ENCODE measurements at regions of chr11 and their contacts with region 1.

Region 1: DNA sequence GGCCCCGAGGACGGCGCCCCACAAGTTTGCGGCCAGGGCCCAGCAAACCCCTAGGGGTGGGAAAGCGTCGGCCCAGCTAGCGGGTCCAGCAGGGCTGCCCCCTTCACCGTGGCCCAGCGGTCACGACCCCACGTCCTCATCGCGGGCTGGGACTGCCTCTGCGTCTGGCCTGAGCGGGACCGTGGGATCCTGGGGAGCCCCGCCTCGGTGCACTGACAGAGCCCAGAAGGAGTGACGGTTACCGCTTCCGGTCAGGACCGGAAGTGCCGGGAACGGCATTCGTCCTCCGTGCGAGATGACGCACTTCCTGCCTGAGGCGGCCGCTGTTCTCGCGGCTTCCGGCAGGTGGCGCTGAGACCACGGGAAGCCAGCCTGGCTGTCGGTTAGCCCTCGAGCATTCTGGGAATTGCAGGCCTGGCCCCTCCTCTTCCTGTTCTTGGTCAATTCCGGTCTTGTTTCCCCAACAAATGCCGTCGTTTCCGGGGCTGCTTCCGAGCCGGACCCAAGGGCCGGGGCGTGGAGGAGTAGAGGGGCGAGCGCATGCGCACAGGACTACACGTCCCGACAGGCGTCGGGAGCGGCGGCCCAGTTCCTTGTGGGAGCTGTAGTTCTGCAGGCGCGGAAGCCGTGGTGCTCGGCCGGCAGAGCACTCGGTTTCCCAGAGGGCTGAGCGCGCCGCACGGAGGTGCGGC is at the start of gene TSSC4:
- DNase-seq: peak; percentile 100
- H3K4me3 ChIP-seq: peak within 1 kb of the TSS; percentile 81 to 88 (median 82)
- H3K27ac ChIP-seq: peak within 1 kb of the TSS; percentile 99
- H3K4me1 ChIP-seq: peaks cover 0 to 31% (median 28%) of the 10 kb centered on the region in 4 donors
- H3K27me3 ChIP-seq: no peaks in the 10 kb centered on the region
- CTCF ChIP-seq: peak; percentile 81 to 97 (median 92)
- EP300 ChIP-seq: peak in 2 of 4 donors; percentile 87 to 96
- POLR2A ChIP-seq: peak; percentile 85 to 93
- total RNA-seq, gene TSSC4: 45.1 to 60.1 (median 53.2) TPM

Region 2: DNA sequence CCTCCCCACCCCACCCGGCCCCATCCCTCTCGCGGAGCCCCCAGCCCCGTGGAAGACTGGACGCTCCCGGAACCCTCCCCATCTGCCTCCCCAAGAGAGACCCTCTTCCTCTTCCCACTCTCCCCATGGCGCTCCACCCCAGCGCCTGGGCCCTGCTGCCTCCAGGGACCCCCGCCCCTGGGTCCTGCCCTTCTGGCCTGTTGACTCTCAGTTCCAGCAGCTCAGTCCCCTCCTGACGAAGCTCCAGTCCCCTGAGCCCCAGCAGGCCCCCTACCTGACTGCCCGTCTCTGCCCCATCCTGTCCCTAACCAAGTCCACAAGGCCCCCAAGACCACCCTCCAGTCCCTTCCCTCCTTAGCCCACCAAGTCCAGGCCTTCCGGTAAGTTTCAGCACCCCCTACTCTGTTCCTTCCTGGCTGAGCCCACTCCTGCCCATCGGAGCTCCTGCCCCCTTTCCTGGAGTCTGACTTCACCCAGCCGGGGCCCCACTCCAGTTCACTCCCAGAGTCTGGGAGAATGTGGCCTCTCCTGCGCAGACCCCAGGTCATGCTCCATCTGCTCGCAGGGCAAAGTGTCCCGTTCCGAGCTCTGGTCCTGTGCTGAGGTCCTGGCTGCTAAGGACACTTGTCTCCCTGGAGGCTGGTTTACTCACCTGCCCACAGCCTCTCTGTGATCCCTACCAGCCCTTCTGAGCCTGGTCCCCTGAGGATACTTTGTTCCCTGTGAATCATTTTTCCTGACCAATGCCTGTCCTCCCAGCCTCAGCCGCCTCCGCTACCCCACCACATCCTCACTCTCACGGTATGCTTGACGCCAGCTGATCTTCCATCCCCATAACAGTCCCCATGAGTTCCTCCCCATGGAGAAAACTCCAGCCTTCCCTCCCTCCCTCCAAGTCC is 650.6 kb before region 1 on chr11:
- intact Hi-C with region 1: loop called (anchors 10 kb)
- DNase-seq: no peak
- H3K4me3 ChIP-seq: peak overlapping the region in 1 of 4 donors; percentile 24
- H3K27ac ChIP-seq: no peak overlapping the region
- H3K4me1 ChIP-seq: peaks cover 0 to 25% (median 15%) of the 10 kb centered on the region in 4 donors
- H3K27me3 ChIP-seq: peaks cover 20 to 33% (median 23%) of the 10 kb centered on the region in 3 donors
- CTCF ChIP-seq: no peak
- EP300 ChIP-seq: no peak
- POLR2A ChIP-seq: no peak

Region 3: DNA sequence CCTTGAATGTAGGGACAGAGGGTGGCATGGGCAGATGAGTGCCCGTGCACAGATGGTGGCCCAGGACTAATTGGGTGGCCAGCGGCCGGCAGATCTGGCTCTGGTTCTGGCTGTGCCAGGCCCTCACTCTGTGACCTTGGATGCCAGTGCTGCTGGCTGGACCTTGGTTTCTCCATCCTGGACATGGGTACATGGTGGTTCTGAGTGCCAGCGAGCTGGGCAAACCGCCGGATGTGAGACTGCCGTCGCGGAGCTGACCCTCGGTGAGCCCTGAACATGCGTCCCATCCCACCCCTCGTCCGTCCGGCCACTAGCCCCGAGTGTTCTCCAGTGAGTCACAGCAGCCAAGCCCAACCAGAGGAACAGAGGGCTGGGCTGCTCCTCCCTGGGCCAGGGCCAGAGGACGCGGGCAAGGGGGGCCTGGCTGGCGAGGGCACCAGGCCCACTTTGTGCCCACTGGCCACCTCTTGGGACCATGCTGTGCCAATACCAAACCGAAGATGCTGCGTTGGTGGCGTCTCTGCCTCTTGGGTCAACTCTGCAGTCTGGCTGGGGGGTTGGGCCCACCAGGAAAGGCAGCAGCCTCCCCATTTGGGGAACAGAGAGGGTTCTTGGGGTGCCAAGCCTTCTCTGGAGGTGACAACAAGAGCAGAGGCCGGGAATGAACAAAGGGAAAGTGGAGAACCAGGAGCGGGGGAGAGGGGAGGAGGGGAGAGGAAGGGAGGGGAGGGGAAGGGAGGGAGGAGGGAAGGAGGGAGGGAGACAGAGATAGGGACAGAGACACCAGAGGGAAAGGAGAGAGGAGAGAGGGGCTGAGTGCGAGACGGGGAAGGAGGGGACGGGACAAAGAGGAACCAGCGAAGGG is 536.6 kb before region 1 on chr11:
- intact Hi-C with region 1: loop called (anchors 10 kb)
- DNase-seq: peak; percentile 94
- H3K4me3 ChIP-seq: peak overlapping the region in 3 of 4 donors; percentile 29 to 41 (median 40)
- H3K27ac ChIP-seq: peak overlapping the region; percentile 84 to 91 (median 88)
- H3K4me1 ChIP-seq: peaks cover 0 to 45% (median 42%) of the 10 kb centered on the region in 4 donors
- H3K27me3 ChIP-seq: no peaks in the 10 kb centered on the region
- CTCF ChIP-seq: no peak
- EP300 ChIP-seq: no peak
- POLR2A ChIP-seq: no peak

Region 4: GRCh38 chr11:2305140-2305840 is 94.9 kb before region 1 on chr11:
- intact Hi-C with region 1: loop called (anchors 5 kb)
- DNase-seq: peak; percentile 95
- H3K4me3 ChIP-seq: peak overlapping the region in 1 of 4 donors; percentile 23
- H3K27ac ChIP-seq: peak overlapping the region; percentile 87 to 94 (median 92)
- H3K4me1 ChIP-seq: peaks cover 0 to 62% (median 52%) of the 10 kb centered on the region in 4 donors
- H3K27me3 ChIP-seq: no peaks in the 10 kb centered on the region
- CTCF ChIP-seq: peak; percentile 91 to 98 (median 94)
- EP300 ChIP-seq: no peak
- POLR2A ChIP-seq: no peak

Region 5: GRCh38 chr11:2382936-2383851 is 17.0 kb before region 1 on chr11:
- intact Hi-C with region 1: loop called (anchors 2 kb)
- DNase-seq: peak; percentile 92
- H3K4me3 ChIP-seq: peak overlapping the region in 2 of 4 donors; percentile 1 to 18
- H3K27ac ChIP-seq: peak overlapping the region; percentile 99 to 100 (median 100)
- H3K4me1 ChIP-seq: peaks cover 0 to 95% (median 93%) of the 10 kb centered on the region in 4 donors
- H3K27me3 ChIP-seq: no peaks in the 10 kb centered on the region
- CTCF ChIP-seq: peak in 1 of 4 experiments; percentile 7
- EP300 ChIP-seq: no peak
- POLR2A ChIP-seq: no peak

Region 6: GRCh38 chr11:3160252-3161031 is 760.2 kb after region 1 on chr11:
- intact Hi-C with region 1: loop called (anchors 10 kb)
- DNase-seq: peak; percentile 96
- H3K4me3 ChIP-seq: peak overlapping the region; percentile 50 to 63 (median 56)
- H3K27ac ChIP-seq: peak overlapping the region; percentile 91 to 96 (median 92)
- H3K4me1 ChIP-seq: peaks cover 0 to 90% (median 84%) of the 10 kb centered on the region in 4 donors
- H3K27me3 ChIP-seq: no peaks in the 10 kb centered on the region
- CTCF ChIP-seq: no peak
- EP300 ChIP-seq: no peak
- POLR2A ChIP-seq: peak in 1 of 2 donors; percentile 40